HAP-1 (cell line): ENCODE measurements at regions of chr1 and their contacts with region 1.

Region 1: DNA sequence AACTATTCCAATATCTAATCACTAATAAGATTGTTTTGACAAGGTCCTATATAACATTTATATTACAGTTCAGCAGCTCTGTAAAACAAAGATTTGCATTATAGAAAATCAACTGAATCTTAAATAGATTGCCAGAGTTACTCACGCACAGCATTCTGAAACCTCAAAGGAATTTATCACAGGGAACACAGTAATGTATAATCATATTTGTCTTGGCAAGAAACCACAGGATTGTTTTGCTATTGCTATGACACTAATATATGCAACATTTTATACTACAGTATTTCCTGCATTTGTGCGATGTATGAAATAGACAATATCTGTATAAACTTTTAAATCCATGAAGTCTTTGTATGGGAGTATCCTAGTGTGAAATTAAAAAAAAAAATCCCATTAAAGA is 101.4 kb downstream of the PLPPR5 start:
- DNase-seq: no peak
- H3K4me3 ChIP-seq: no peak overlapping the region
- H3K4me1 ChIP-seq: no peaks in the 10 kb centered on the region
- H3K27me3 ChIP-seq: no peaks in the 10 kb centered on the region

Region 2: GRCh38 chr1:98420376-98421084 is 482.7 kb before region 1 on chr1:
- in situ Hi-C with region 1: no loop called
- DNase-seq: no peak
- H3K4me3 ChIP-seq: no peak overlapping the region
- H3K4me1 ChIP-seq: no peaks in the 10 kb centered on the region
- H3K27me3 ChIP-seq: no peaks in the 10 kb centered on the region

Region 3: GRCh38 chr1:98556521-98557158 is 346.6 kb before region 1 on chr1:
- in situ Hi-C with region 1: no loop called
- DNase-seq: peak in 1 of 2 experiments; percentile 43
- H3K4me3 ChIP-seq: no peak overlapping the region
- H3K4me1 ChIP-seq: no peaks in the 10 kb centered on the region
- H3K27me3 ChIP-seq: no peaks in the 10 kb centered on the region; the same call in 1 of the 2 replicates

Region 4: GRCh38 chr1:98849969-98850636 is 53.2 kb before region 1 on chr1:
- in situ Hi-C with region 1: loop called (anchors 10 kb)
- DNase-seq: no peak
- H3K4me3 ChIP-seq: no peak overlapping the region
- H3K4me1 ChIP-seq: no peaks in the 10 kb centered on the region
- H3K27me3 ChIP-seq: no peaks in the 10 kb centered on the region

Region 5: GRCh38 chr1:99645699-99646531 is 742.7 kb after region 1 on chr1 and contains the start of gene PALMD:
- in situ Hi-C with region 1: no loop called
- DNase-seq: no peak
- H3K4me3 ChIP-seq: no peak within 1 kb of the TSS
- H3K4me1 ChIP-seq: peaks cover 10% of the 10 kb centered on the region
- H3K27me3 ChIP-seq: no peaks in the 10 kb centered on the region